ENCODE measurements at regions of chrX and their contacts with region 1.

Region 1: DNA sequence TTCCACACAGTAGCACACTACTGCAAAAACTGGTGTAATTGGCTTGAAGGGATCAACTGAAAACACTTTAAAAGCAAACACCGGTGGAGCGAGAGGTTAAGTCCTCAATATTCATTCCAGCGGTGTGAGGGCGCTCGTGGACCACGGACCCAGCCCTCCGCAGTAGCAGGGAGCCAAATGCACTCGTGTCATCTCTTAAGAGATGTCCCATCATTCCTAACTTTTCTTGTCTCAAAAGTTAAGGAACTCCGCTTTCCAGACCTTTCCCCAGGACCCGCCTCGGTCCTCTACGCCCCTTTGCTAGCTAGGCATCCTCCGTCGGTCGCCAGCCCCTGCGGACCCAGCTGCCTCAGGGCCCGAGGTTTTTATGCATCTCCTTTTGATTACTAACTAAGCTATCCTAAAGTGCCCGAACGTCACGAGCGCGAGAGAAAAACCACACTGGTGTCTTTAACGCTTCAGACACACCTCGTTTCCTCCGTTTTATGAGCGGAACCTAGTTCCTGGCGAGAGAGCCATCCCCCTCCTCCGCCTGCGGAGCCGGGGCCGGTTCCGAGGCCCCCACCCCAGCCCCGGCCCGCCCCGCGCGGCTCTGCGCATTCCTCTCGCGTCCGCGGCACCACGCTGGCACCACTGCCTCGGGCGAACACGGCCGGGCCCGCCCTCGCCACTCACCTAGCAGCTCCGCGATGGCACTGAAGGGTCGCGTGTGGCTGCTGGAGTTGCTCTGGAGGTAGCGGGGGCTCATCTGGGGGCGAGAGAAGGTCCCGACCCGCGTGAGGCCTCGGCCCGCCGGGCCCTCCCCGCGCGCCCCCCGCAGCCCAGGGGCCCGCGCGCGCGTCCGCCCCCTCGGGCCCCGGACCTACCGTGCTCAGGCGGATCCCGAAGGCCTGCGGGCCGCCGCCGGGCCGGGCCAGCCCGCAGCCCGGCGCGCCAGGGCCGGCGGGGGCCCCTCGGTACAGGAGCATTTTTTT is 723 bp downstream of the MORC4 start:
- DNase-seq: peak; percentile 6 to 63 (median 49)
- ATAC-seq: peak; percentile 72
- H3K4me3 ChIP-seq: peak overlapping the region; percentile 53
- H3K4me3 Mint-ChIP-seq: peak overlapping the region; percentile 75 to 94 (median 86)
- H3K27ac ChIP-seq: peak overlapping the region; percentile 41
- H3K27ac Mint-ChIP-seq: peak overlapping the region in 8 of 9 donors; percentile 57 to 87 (median 71)
- H3K4me1 ChIP-seq: peaks cover 0 to 5% of the 10 kb centered on the region in 2 donors
- H3K4me1 Mint-ChIP-seq: peaks cover 5 to 13% (median 12%) of the 10 kb centered on the region in 7 donors
- H3K27me3 ChIP-seq: no peaks in the 10 kb centered on the region
- H3K27me3 Mint-ChIP-seq: peaks cover 0 to 2% (median 0%) of the 10 kb centered on the region in 5 donors

Region 2: GRCh38 chrX:106939566-106939965 is 59.7 kb before region 1 on chrX:
- CTCF ChIA-PET with region 1: no interaction called
- POLR2A ChIA-PET with region 1: no interaction called
- intact Hi-C with region 1: no loop called
- DNase-seq: no peak
- ATAC-seq: no peak
- H3K4me3 ChIP-seq: no peak overlapping the region
- H3K4me3 Mint-ChIP-seq: no peak overlapping the region
- H3K27ac ChIP-seq: no peak overlapping the region
- H3K27ac Mint-ChIP-seq: no peak overlapping the region
- H3K4me1 ChIP-seq: no peaks in the 10 kb centered on the region
- H3K4me1 Mint-ChIP-seq: peaks cover 0 to 2% (median 0%) of the 10 kb centered on the region in 7 donors
- H3K27me3 ChIP-seq: no peaks in the 10 kb centered on the region
- H3K27me3 Mint-ChIP-seq: no peaks in the 10 kb centered on the region

Region 3: GRCh38 chrX:106987488-106987887 is 11.8 kb before region 1 on chrX:
- CTCF ChIA-PET with region 1: no interaction called
- POLR2A ChIA-PET with region 1: no interaction called
- intact Hi-C with region 1: loop called in 1 of 2 experiments (anchors 1 kb)
- DNase-seq: peak in 2 of 9 donors; percentile 8 to 9
- ATAC-seq: peak; percentile 22
- H3K4me3 ChIP-seq: no peak overlapping the region
- H3K4me3 Mint-ChIP-seq: peak overlapping the region in 5 of 10 donors; percentile 16 to 61 (median 41)
- H3K27ac ChIP-seq: no peak overlapping the region
- H3K27ac Mint-ChIP-seq: peak overlapping the region in 1 of 9 donors; percentile 22
- H3K4me1 ChIP-seq: peaks cover 0 to 15% of the 10 kb centered on the region in 2 donors
- H3K4me1 Mint-ChIP-seq: peaks cover 0 to 25% (median 14%) of the 10 kb centered on the region in 7 donors
- H3K27me3 ChIP-seq: no peaks in the 10 kb centered on the region
- H3K27me3 Mint-ChIP-seq: no peaks in the 10 kb centered on the region

Region 4: DNA sequence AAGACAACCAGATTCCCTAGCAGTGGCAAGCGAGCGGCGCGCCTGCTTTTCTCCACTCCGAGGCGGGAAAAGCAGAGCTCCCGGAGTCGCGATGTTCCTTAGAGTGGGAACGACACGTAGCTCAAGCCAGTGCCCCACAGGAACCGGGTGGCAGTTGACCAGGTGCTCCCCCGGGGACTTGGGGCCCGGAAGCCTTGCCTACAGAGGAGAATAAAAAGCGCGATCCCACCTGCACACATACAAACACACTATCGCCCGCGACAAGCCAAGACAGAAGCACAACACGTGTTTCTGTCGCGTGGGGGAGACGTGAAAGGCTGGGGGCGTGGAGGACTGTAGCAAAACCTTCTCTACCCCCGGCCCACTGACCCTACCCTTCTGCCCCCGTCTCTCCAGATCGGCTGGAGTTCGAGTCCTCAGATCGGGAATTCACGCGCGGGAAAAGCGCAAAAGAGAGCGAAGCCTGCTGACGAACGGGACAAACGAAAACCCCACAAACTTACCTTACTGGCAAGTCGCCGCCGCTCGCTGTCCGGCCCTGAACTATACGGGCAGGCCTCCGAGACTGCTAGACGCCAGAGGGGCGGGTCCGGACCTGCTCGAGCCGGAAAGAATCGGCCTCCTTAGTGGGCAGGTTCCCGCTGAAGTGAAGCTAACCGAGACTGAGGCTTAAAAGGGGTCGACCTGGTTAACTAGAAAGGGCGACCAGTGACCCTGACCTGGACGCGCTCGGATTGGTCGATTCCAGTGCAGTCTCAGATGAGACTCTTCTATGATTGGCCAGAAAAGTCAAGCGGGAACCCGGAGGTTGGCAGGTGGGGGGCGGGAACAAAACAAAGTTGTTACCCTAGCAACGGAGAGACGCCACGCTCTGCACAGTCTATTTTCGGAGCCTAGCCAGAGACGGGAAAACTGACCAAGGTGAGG is 206.7 kb after region 1 on chrX and contains the starts of genes DNAAF6 and NUP62CL:
- CTCF ChIA-PET with region 1: no interaction called
- POLR2A ChIA-PET with region 1: no interaction called
- intact Hi-C with region 1: loop called (anchors 1 to 10 kb)
- DNase-seq: peak; percentile 28 to 75 (median 61)
- ATAC-seq: peak; percentile 94
- H3K4me3 ChIP-seq: peak within 1 kb of the TSS; percentile 72
- H3K4me3 Mint-ChIP-seq: peak within 1 kb of the TSS; percentile 80 to 93 (median 90)
- H3K27ac ChIP-seq: peak within 1 kb of the TSS; percentile 57
- H3K27ac Mint-ChIP-seq: peak within 1 kb of the TSS; percentile 28 to 84 (median 74)
- H3K4me1 ChIP-seq: no peaks in the 10 kb centered on the region
- H3K4me1 Mint-ChIP-seq: peaks cover 0 to 11% (median 3%) of the 10 kb centered on the region in 7 donors
- H3K27me3 ChIP-seq: no peaks in the 10 kb centered on the region
- H3K27me3 Mint-ChIP-seq: peaks cover 0 to 2% (median 0%) of the 10 kb centered on the region in 5 donors
- total RNA-seq, gene DNAAF6: not detected
- total RNA-seq, gene NUP62CL: 0.73 to 2.1 (median 1.6) TPM

Region 5: DNA sequence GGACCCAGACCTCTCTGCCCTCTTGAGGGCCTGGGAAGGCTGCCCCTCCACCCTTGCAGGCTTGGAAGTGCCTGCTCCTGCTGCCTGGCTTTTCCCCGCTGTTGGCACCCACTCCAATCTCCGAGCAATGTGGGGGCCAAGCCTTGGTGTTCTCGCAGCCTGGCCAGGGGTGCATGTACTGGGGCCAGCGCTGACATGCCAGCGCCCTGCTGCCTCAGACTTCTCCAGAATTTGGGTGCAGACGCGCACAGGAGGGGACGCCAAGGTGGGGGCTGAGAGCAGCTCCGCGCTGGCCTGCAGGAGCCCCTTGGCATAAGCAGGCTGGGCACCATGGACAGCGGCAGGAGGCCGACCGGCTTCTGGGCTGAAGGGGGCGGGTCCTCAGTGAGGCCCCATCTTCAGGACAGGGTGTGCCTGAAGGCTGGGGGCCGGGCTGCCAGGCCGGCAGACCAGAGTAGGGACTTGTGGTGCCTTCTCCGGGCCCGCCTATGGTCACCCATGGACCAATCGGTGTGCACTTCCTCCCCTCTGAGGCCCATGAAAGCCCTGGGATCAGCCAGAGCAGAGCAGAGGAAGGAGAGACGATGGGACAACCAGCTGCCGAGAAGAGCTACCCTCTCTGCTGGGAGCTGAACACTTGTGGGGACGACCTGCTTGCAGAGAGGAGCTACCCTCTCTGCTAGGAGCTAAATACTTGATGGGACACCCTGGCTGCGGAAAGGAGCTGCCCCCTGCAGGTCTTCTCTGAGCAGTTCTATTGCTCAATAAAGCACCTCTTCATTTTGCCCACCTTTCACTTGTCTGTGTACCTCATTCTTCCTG is 325.4 kb after region 1 on chrX:
- CTCF ChIA-PET with region 1: no interaction called
- POLR2A ChIA-PET with region 1: no interaction called
- intact Hi-C with region 1: loop called in 1 of 2 experiments (anchors 2 kb)
- DNase-seq: peak in 1 of 9 donors; percentile 19
- ATAC-seq: peak; percentile 16
- H3K4me3 ChIP-seq: no peak overlapping the region
- H3K4me3 Mint-ChIP-seq: no peak overlapping the region
- H3K27ac ChIP-seq: no peak overlapping the region
- H3K27ac Mint-ChIP-seq: no peak overlapping the region
- H3K4me1 ChIP-seq: no peaks in the 10 kb centered on the region
- H3K4me1 Mint-ChIP-seq: no peaks in the 10 kb centered on the region
- H3K27me3 ChIP-seq: no peaks in the 10 kb centered on the region
- H3K27me3 Mint-ChIP-seq: peaks cover 0 to 13% (median 2%) of the 10 kb centered on the region in 5 donors

Region 6: GRCh38 chrX:107551546-107551945 is 552.3 kb after region 1 on chrX:
- CTCF ChIA-PET with region 1: no interaction called
- POLR2A ChIA-PET with region 1: no interaction called
- intact Hi-C with region 1: no loop called
- DNase-seq: no peak
- ATAC-seq: no peak
- H3K4me3 ChIP-seq: no peak overlapping the region
- H3K4me3 Mint-ChIP-seq: no peak overlapping the region
- H3K27ac ChIP-seq: no peak overlapping the region
- H3K27ac Mint-ChIP-seq: no peak overlapping the region
- H3K4me1 ChIP-seq: peaks cover 0 to 12% of the 10 kb centered on the region in 2 donors
- H3K4me1 Mint-ChIP-seq: peaks cover 9 to 19% (median 17%) of the 10 kb centered on the region in 7 donors
- H3K27me3 ChIP-seq: no peaks in the 10 kb centered on the region
- H3K27me3 Mint-ChIP-seq: peaks cover 0 to 3% (median 0%) of the 10 kb centered on the region in 5 donors

Region 7: DNA sequence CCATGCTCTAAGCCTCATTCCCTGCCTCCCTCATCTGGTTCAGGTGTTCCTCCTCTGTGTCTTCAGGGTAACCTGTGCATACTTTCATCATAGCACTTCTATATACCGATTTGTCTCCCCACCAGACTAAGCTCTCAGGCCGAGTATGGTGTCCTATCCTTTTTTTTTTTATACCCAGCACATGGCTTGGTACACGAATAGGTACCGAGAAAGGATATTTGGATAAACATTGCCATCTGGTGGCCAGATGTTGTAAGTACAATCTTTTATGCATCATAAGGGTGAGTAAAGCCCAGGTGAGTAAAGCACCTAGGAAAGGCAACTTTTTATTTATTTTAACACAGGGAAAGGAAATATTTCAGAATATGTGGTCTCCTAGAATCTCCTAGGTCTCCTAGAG is 894.7 kb after region 1 on chrX:
- CTCF ChIA-PET with region 1: no interaction called
- POLR2A ChIA-PET with region 1: no interaction called
- intact Hi-C with region 1: loop called (anchors 1 kb)
- DNase-seq: peak in 7 of 9 donors; percentile 30 to 68 (median 61)
- ATAC-seq: peak; percentile 72
- H3K4me3 ChIP-seq: no peak overlapping the region
- H3K4me3 Mint-ChIP-seq: no peak overlapping the region
- H3K27ac ChIP-seq: no peak overlapping the region
- H3K27ac Mint-ChIP-seq: peak overlapping the region in 3 of 9 donors; percentile 20 to 90 (median 52)
- H3K4me1 ChIP-seq: no peaks in the 10 kb centered on the region
- H3K4me1 Mint-ChIP-seq: peaks cover 0 to 8% (median 0%) of the 10 kb centered on the region in 7 donors
- H3K27me3 ChIP-seq: no peaks in the 10 kb centered on the region
- H3K27me3 Mint-ChIP-seq: no peaks in the 10 kb centered on the region